Mammary epithelial cell (primary cell): ENCODE measurements at regions of chr4 and their contacts with region 1.

Region 1: GRCh38 chr4:26583865-26584652 is at the start of gene TBC1D19:
- DNase-seq: peak; percentile 88
- H3K4me3 ChIP-seq: peak within 1 kb of the TSS; percentile 80 to 87 (median 81)
- H3K27ac ChIP-seq: peak within 1 kb of the TSS; percentile 91
- H3K4me1 ChIP-seq: peaks cover 8% of the 10 kb centered on the region
- H3K27me3 ChIP-seq: no peaks in the 10 kb centered on the region
- CTCF ChIP-seq: no peak
- total RNA-seq, gene TBC1D19: 13.6 to 34.0 TPM

Region 2: DNA sequence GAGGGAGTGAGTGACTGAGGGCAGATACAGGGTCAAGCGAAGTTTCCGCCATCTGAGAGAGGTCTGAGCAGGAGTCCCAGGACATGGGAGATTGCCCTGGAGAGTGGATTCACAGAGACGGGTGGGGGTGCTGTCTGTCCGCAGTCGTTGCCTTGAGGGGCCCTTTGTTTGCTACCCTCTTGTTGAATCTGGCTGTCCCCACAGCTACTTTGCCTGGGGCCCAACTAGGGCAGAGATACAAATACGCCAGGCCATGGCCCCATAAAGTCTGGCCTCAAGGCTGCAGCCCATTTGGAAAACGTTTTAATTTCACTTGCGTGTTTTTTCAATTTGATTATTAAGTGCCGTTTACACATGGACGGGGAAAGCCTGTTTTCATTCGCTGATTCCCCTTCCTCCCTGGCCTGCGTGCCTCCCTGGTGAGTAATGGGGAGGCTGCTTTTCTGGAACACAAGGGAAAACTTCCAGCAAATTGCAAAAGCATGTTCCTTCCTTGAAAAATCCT is 535.6 kb before region 1 on chr4:
- CTCF ChIA-PET with region 1: interaction called, 15 read pairs
- dilution Hi-C with region 1: no loop called
- in situ Hi-C with region 1: no loop called
- intact Hi-C with region 1: no loop called
- DNase-seq: no peak
- H3K4me3 ChIP-seq: no peak overlapping the region
- H3K27ac ChIP-seq: no peak overlapping the region
- H3K4me1 ChIP-seq: no peaks in the 10 kb centered on the region
- H3K27me3 ChIP-seq: no peaks in the 10 kb centered on the region
- CTCF ChIP-seq: no peak

Region 3: GRCh38 chr4:26081795-26082498 is 502.1 kb before region 1 on chr4:
- CTCF ChIA-PET with region 1: no interaction called
- dilution Hi-C with region 1: no loop called
- in situ Hi-C with region 1: no loop called
- intact Hi-C with region 1: no loop called
- DNase-seq: peak; percentile 38
- H3K4me3 ChIP-seq: no peak overlapping the region
- H3K27ac ChIP-seq: no peak overlapping the region
- H3K4me1 ChIP-seq: peaks cover 17% of the 10 kb centered on the region
- H3K27me3 ChIP-seq: peaks cover 8% of the 10 kb centered on the region
- CTCF ChIP-seq: peak; percentile 64 to 65